HEK293 (cell line): ENCODE measurements at regions of chr2 and their contacts with region 1.

Region 1: DNA sequence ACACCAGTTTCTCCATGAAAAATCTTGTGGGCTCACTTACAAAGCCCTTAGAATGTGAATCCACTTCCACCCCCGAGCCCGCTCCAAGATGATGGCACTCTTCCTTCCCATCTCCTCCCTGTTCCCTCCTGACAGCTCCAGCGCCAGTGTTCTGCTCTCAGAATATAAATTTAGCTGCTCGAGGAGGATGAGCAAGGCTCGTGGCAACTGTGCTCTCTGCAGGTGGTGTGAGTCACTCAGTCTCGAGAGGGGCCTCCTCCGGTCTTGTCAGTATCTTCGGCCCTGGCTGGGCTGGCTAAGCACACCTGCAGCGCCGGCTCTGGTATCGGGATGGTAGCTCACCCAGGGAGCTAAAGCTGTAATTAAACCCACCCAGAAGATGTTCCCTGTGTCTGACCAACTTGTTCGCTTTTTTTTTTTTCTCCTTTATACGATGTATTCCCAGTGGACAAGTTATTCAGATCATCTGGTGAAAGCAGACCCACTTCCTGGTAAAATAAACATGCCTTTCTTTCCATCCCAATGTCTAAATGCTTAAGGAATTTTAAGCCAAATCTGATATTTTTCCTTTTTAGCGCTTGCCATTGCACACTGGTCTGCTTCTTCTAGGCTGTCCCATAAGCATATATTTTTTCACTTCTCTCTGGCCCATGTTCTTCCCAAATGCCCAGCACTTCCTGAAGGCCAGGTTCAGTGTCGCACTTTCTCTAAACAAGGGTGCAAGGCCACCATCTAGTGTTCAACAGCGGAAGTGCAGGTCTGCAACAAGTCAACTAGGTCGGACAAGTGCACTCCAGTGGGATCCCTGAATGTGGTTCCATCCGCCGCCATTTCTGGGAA is 31.4 kb upstream of the YPEL5 start:
- H3K4me3 ChIP-seq: no peak overlapping the region; the same call in 1 of the 2 replicates
- H3K27ac ChIP-seq: no peak overlapping the region
- H3K4me1 ChIP-seq: no peaks in the 10 kb centered on the region
- CTCF ChIP-seq: peak; percentile 75

Region 2: GRCh38 chr2:30089171-30089570 is 26.2 kb before region 1 on chr2:
- CTCF ChIA-PET with region 1: interaction called, 22 read pairs
- POLR2A ChIA-PET with region 1: no interaction called
- H3K4me3 ChIP-seq: no peak overlapping the region
- H3K27ac ChIP-seq: no peak overlapping the region
- H3K4me1 ChIP-seq: no peaks in the 10 kb centered on the region
- CTCF ChIP-seq: no peak

Region 3: DNA sequence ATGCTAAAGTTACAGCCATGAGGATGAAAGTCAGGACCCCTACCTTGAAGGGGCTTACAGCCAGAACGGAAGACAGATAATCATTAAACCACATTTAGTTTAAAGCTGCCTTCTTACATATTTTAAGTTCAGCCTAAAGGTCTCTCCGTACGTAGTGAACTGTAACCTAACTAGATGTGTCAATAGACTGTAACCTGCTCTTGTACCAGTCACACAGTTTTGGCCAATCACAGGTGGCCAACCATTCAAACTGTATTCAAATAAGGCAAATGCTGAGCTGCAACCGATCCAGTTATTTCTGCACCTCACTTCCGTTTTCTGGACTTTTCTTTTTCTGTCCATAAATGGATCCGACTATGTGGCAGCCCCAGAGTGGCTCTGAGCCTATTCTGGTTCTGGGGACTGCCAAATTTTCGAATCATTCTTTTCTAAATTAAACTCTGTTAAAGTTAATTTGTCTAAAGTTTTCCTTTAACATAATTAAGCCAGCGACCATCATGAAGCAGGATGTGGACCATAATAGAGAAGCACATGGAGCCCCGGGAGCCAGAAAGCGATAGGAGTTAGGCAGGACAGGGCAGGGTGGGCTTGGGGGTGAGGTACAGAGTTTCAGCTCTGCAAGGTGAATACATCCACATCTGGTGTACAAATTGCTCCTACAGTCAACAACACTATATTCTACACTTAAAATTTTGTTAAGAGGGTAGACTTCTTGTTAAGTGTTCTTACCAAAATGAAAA is 16.9 kb before region 1 on chr2:
- CTCF ChIA-PET with region 1: interaction called, 29 read pairs
- POLR2A ChIA-PET with region 1: interaction called, 3 read pairs
- H3K4me3 ChIP-seq: no peak overlapping the region
- H3K27ac ChIP-seq: no peak overlapping the region
- H3K4me1 ChIP-seq: no peaks in the 10 kb centered on the region
- CTCF ChIP-seq: no peak

Region 4: DNA sequence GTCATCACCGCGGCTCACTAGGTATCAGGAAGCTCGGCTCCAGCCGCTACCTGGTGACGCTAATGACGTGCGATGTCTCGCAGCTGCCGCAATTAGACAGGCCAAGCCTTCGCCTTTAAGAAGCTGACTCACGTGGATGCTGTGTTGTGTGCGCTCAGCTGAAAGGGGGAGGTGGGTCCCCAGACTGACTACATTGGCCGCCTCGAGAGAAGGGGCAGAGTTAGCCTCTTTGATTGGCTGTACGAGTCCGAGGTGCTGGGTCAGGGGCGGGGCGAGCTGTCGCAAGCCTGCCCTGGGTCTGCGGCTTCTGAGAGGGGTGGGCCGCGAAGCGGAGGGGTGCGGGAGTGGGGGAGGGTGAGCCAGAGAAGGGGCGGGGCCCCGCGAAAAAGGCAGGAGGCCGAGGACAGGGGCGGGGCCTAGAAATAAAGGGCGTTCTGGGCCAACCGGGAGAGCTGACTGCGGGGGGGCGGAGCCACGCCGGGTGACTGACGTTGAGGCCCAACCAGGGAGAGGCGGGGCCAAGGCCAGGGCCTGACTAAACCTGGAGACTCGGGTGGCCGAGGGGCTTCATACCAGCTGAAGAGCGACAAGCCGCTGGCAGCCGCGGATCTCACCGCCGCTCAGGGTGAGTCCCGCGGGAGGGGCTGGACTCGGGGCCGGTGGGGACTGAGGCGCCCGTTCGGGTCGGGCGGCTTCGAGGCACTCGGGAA is 31.2 kb after region 1 on chr2 and contains the start of gene YPEL5:
- CTCF ChIA-PET with region 1: interaction called, 12 read pairs
- POLR2A ChIA-PET with region 1: interaction called, 4 read pairs
- H3K4me3 ChIP-seq: peak within 1 kb of the TSS; percentile 80
- H3K27ac ChIP-seq: peak within 1 kb of the TSS; percentile 92
- H3K4me1 ChIP-seq: peaks cover 22% of the 10 kb centered on the region
- CTCF ChIP-seq: no peak